ENCODE measurements at regions of chr15 and their contacts with region 1.

Region 1: GRCh38 chr15:92087211-92087610 is 233.7 kb downstream of the SLCO3A1 start:
- DNase-seq: no peak
- H3K4me3 ChIP-seq: no peak overlapping the region
- H3K27ac ChIP-seq: no peak overlapping the region
- H3K4me1 ChIP-seq: peaks cover 0 to 3% (median 1%) of the 10 kb centered on the region in 4 donors
- H3K27me3 ChIP-seq: no peaks in the 10 kb centered on the region
- CTCF ChIP-seq: no peak
- EP300 ChIP-seq: no peak
- POLR2A ChIP-seq: no peak

Region 2: GRCh38 chr15:91291673-91292072 is 795.5 kb before region 1 on chr15:
- intact Hi-C with region 1: loop called (anchors 5 kb)
- DNase-seq: peak in 1 of 2 donors; percentile 39
- H3K4me3 ChIP-seq: no peak overlapping the region
- H3K27ac ChIP-seq: no peak overlapping the region
- H3K4me1 ChIP-seq: no peaks in the 10 kb centered on the region
- H3K27me3 ChIP-seq: peaks cover 0 to 30% (median 7%) of the 10 kb centered on the region in 3 donors
- CTCF ChIP-seq: no peak
- EP300 ChIP-seq: no peak
- POLR2A ChIP-seq: no peak

Region 3: DNA sequence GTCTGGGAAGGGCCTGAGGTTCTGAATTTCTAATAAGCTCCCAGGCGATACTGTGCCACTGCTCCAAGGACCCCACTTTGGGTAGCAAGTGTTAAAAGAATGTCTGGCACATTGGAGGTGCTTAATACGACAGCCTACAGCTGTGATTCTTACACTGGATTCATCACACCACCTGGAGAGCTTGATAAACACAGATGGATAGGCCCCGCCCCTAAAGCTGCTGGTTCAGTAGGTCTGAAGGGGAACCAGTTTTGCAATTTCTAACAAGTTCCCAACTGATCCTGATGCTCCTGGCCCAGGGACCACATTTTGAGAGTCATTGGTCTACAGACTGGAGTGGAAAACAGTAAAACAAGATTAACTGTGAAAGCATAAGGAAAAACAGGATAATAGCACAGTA is 181.7 kb after region 1 on chr15:
- intact Hi-C with region 1: no loop called
- DNase-seq: peak in 1 of 2 donors; percentile 15
- H3K4me3 ChIP-seq: no peak overlapping the region
- H3K27ac ChIP-seq: no peak overlapping the region
- H3K4me1 ChIP-seq: no peaks in the 10 kb centered on the region
- H3K27me3 ChIP-seq: peaks cover 0 to 25% (median 0%) of the 10 kb centered on the region in 3 donors
- CTCF ChIP-seq: no peak
- EP300 ChIP-seq: no peak
- POLR2A ChIP-seq: no peak

Measured in stomach (tissue), 19 donors.